CD4-positive, alpha-beta memory T cell (primary cell): ENCODE measurements at regions of chr5 and their contacts with region 1.

Region 1: DNA sequence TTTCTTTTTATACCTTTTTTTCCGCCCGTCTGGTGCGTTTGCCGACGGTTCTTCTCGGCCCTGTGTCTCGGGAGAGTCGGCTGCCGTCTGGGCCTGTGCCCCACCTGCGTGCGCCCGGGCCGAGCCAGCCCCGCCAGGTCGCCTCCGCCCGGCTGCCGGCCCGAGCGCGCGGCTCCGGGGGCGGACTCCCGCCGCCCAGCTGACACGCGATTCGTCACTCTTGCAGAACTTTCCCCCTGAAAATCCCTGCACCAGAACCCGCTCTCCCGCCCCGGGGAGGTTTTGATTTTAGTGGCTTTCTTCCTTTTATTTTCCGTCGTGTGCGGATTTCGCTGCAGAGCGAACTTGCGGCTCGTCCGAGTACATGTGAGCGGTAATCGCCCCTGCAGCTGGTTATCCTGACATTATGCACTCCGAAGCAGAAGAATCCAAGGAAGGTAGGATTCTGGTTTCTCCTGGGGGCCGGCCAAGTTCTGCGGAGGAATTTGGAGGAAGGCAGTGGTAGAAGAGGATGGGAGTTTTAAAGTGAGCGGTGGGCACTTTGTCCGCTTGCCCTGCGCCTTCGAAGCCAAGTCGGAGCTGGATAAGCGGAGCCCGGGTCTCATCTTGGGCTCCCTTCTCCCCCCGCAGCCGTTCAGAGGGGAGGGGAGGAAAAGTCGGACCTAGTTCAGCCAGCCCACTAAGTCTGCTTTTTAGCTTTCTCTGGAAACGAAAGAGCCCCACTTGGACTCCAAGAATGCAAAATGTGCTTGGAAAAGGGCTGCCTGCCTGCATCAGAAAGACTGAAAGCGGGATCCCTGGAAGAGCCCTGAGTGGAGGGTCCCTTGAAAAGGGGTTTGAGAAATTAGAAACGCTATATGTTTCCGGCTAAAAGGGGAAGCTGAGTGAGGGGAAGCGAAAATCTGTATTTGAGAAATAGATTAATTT is at the start of gene TNFAIP8:
- DNase-seq: peak in 2 of 5 donors; percentile 12 to 75
- H3K4me3 ChIP-seq: peak within 1 kb of the TSS; percentile 51 to 55
- H3K4me3 Mint-ChIP-seq: peak within 1 kb of the TSS; percentile 82 to 97 (median 90)
- H3K27ac ChIP-seq: peak within 1 kb of the TSS; percentile 78
- H3K27ac Mint-ChIP-seq: peak within 1 kb of the TSS; percentile 86 to 97 (median 93)
- H3K4me1 ChIP-seq: peaks cover 93% of the 10 kb centered on the region
- H3K4me1 Mint-ChIP-seq: peaks cover 75 to 95% (median 86%) of the 10 kb centered on the region in 4 donors
- H3K27me3 ChIP-seq: no peaks in the 10 kb centered on the region
- H3K27me3 Mint-ChIP-seq: no peaks in the 10 kb centered on the region
- total RNA-seq, gene TNFAIP8: 167 to 176 TPM

Region 2: GRCh38 chr5:119200795-119201194 is 155.2 kb before region 1 on chr5:
- CTCF ChIA-PET with region 1: no interaction called
- POLR2A ChIA-PET with region 1: no interaction called
- intact Hi-C with region 1: no loop called
- DNase-seq: no peak
- H3K4me3 ChIP-seq: no peak overlapping the region
- H3K4me3 Mint-ChIP-seq: no peak overlapping the region
- H3K27ac ChIP-seq: no peak overlapping the region
- H3K27ac Mint-ChIP-seq: peak overlapping the region in 1 of 7 donors; percentile 31
- H3K4me1 ChIP-seq: no peaks in the 10 kb centered on the region
- H3K4me1 Mint-ChIP-seq: peaks cover 0 to 7% (median 4%) of the 10 kb centered on the region in 4 donors
- H3K27me3 ChIP-seq: no peaks in the 10 kb centered on the region
- H3K27me3 Mint-ChIP-seq: no peaks in the 10 kb centered on the region

Region 3: GRCh38 chr5:119340597-119341218 is 15.2 kb before region 1 on chr5:
- CTCF ChIA-PET with region 1: interaction called, 64 read pairs
- POLR2A ChIA-PET with region 1: interaction called, 727 read pairs
- intact Hi-C with region 1: loop called (anchors 1 kb)
- DNase-seq: peak; percentile 71 to 85 (median 77)
- H3K4me3 ChIP-seq: peak overlapping the region; percentile 40 to 63
- H3K4me3 Mint-ChIP-seq: peak overlapping the region; percentile 80 to 89 (median 86)
- H3K27ac ChIP-seq: peak overlapping the region; percentile 75
- H3K27ac Mint-ChIP-seq: peak overlapping the region; percentile 89 to 97 (median 92)
- H3K4me1 ChIP-seq: peaks cover 99% of the 10 kb centered on the region
- H3K4me1 Mint-ChIP-seq: peaks cover 81 to 97% (median 89%) of the 10 kb centered on the region in 4 donors
- H3K27me3 ChIP-seq: no peaks in the 10 kb centered on the region
- H3K27me3 Mint-ChIP-seq: no peaks in the 10 kb centered on the region

Region 4: GRCh38 chr5:119367502-119368237 is 11.7 kb after region 1 on chr5:
- CTCF ChIA-PET with region 1: interaction called, 12 read pairs
- POLR2A ChIA-PET with region 1: interaction called, 72 read pairs
- intact Hi-C with region 1: loop called (anchors 1 kb)
- DNase-seq: peak in 1 of 5 donors; percentile 71
- H3K4me3 ChIP-seq: peak overlapping the region in 1 of 2 donors; percentile 28
- H3K4me3 Mint-ChIP-seq: peak overlapping the region in 7 of 8 donors; percentile 61 to 83 (median 68)
- H3K27ac ChIP-seq: peak overlapping the region; percentile 62
- H3K27ac Mint-ChIP-seq: peak overlapping the region; percentile 85 to 91 (median 88)
- H3K4me1 ChIP-seq: peaks cover 87% of the 10 kb centered on the region
- H3K4me1 Mint-ChIP-seq: peaks cover 70 to 87% (median 79%) of the 10 kb centered on the region in 4 donors
- H3K27me3 ChIP-seq: no peaks in the 10 kb centered on the region
- H3K27me3 Mint-ChIP-seq: no peaks in the 10 kb centered on the region

Region 5: GRCh38 chr5:119397518-119398380 is 41.8 kb after region 1 on chr5:
- CTCF ChIA-PET with region 1: interaction called, 3 read pairs
- POLR2A ChIA-PET with region 1: interaction called, 4 read pairs
- intact Hi-C with region 1: loop called (anchors 5 kb)
- DNase-seq: peak in 1 of 5 donors; percentile 48
- H3K4me3 ChIP-seq: no peak overlapping the region
- H3K4me3 Mint-ChIP-seq: peak overlapping the region in 4 of 8 donors; percentile 3 to 76 (median 19)
- H3K27ac ChIP-seq: no peak overlapping the region
- H3K27ac Mint-ChIP-seq: peak overlapping the region; percentile 15 to 91 (median 69)
- H3K4me1 ChIP-seq: peaks cover 49% of the 10 kb centered on the region
- H3K4me1 Mint-ChIP-seq: peaks cover 46 to 62% (median 54%) of the 10 kb centered on the region in 4 donors
- H3K27me3 ChIP-seq: no peaks in the 10 kb centered on the region
- H3K27me3 Mint-ChIP-seq: no peaks in the 10 kb centered on the region